ENCODE measurements at regions of chr17 and their contacts with region 1.

Region 1: GRCh38 chr17:74368092-74369081 is 1.1 kb downstream of the GPR142 start:
- H3K4me3 ChIP-seq: no peak overlapping the region
- H3K27ac ChIP-seq: no peak overlapping the region
- H3K4me1 ChIP-seq: no peaks in the 10 kb centered on the region
- CTCF ChIP-seq: peak; percentile 81

Region 2: DNA sequence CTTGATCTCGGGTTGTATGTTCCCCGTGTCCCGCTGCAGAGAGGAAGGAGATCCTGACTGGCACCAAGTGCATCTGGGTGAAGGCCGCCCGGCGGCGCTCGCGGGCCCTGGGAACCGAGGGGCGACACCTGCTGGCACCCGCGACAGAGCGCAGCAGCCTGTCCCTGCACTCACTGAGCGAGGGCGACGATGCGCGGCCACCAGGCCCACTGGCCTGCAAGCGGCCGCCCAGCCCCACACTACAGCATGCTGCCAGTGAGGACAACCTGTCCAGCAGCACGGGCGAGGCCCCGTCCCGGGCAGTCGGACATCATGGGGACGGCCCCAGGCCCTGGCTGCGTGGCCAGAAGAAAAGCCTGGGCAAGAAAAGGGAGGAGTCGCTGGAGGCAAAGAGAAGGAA is 14.3 kb before region 1 on chr17:
- CTCF ChIA-PET with region 1: interaction called, 31 read pairs
- POLR2A ChIA-PET with region 1: no interaction called
- H3K4me3 ChIP-seq: no peak overlapping the region
- H3K27ac ChIP-seq: no peak overlapping the region
- H3K4me1 ChIP-seq: no peaks in the 10 kb centered on the region
- CTCF ChIP-seq: peak; percentile 76; the same call in 1 of the 2 replicates

Region 3: GRCh38 chr17:74394977-74395376 is 26.6 kb after region 1 on chr17:
- CTCF ChIA-PET with region 1: interaction called, 20 read pairs
- POLR2A ChIA-PET with region 1: no interaction called
- H3K4me3 ChIP-seq: no peak overlapping the region
- H3K27ac ChIP-seq: no peak overlapping the region
- H3K4me1 ChIP-seq: no peaks in the 10 kb centered on the region
- CTCF ChIP-seq: no peak

Region 4: GRCh38 chr17:74437702-74438101 is 69.3 kb after region 1 on chr17:
- CTCF ChIA-PET with region 1: interaction called, 14 read pairs
- POLR2A ChIA-PET with region 1: no interaction called
- H3K4me3 ChIP-seq: no peak overlapping the region
- H3K27ac ChIP-seq: no peak overlapping the region
- H3K4me1 ChIP-seq: peaks cover 2% of the 10 kb centered on the region; the same call in 1 of the 2 replicates
- CTCF ChIP-seq: no peak

Region 5: GRCh38 chr17:74493381-74493833 is 125.0 kb after region 1 on chr17:
- CTCF ChIA-PET with region 1: interaction called, 46 read pairs
- POLR2A ChIA-PET with region 1: no interaction called
- H3K4me3 ChIP-seq: no peak overlapping the region
- H3K27ac ChIP-seq: no peak overlapping the region
- H3K4me1 ChIP-seq: no peaks in the 10 kb centered on the region
- CTCF ChIP-seq: 0 out of 2 replicates have a peak, but pooled peaks have one; percentile 40

Region 6: DNA sequence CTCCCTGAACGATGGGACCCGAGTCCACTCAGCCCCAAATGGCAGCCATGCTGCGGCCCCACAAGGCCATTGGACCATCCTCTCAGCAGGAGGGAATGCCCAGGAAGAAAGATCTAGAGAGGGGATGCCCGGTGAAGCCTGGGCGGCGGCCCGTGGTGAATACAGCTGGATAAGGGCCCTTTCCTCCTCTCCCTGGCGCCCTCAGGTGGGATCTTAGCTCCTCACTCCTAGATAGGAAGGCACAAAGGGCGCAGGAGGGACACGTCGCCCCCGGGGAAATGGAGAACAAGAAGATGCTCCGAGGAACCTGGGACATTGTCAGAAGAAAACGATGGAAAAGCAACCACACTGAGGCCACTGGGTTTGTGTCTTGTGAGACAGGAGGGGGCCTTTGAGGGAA is 175.0 kb after region 1 on chr17:
- CTCF ChIA-PET with region 1: no interaction called
- POLR2A ChIA-PET with region 1: no interaction called
- H3K4me3 ChIP-seq: no peak overlapping the region
- H3K27ac ChIP-seq: no peak overlapping the region
- H3K4me1 ChIP-seq: no peaks in the 10 kb centered on the region
- CTCF ChIP-seq: no peak

Region 7: DNA sequence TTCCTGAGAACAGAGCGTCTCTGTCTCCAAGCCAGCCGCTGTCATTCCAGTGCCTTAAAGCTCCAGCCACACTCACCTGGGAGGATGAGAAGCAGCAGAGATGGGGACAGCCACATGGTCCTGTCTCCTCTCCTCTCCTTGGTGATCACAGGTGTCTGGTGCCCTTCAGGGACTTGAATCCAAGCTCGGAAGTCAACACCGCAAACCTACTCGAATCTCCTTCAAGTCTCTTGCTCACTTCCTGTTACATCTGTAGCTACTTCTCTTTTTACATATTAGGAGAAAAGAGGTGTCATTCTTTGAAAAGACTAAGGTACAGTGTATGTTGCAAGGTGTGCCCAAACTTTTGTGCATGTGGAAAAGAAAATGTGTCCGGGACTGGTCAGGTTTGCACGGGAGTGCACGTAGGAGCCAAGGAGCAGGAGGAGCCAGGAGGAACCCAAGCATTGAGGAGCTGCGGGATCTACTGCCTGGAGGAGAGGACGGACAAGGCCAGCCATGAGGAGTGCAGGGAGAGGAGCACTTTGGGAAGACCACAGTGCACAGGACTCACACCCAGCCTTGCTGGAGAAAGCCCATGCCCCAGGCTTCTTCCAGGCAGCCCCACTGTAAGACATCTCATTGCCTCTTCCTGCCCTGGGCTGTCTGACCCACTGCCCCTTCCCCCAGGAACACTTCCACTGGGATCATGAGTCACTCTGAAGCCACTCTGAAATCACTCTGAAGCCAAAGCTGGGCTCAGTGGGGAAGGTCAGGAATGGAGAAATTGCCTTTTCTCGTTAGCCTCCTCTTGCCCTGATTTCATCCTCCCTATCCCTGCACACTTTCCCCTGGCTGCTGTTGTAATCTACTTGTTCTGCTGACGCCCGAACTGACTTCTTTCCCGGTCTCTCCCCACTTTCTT is 224.0 kb after region 1 on chr17 and contains the start of gene CD300LD:
- CTCF ChIA-PET with region 1: interaction called, 11 read pairs
- POLR2A ChIA-PET with region 1: no interaction called
- H3K4me3 ChIP-seq: no peak within 1 kb of the TSS
- H3K27ac ChIP-seq: no peak within 1 kb of the TSS
- H3K4me1 ChIP-seq: no peaks in the 10 kb centered on the region
- CTCF ChIP-seq: no peak

Measured in HEK293 (cell line).